Heart right ventricle (tissue), 16 donors: ENCODE measurements at regions of chr9 and their contacts with region 1.

Region 1: DNA sequence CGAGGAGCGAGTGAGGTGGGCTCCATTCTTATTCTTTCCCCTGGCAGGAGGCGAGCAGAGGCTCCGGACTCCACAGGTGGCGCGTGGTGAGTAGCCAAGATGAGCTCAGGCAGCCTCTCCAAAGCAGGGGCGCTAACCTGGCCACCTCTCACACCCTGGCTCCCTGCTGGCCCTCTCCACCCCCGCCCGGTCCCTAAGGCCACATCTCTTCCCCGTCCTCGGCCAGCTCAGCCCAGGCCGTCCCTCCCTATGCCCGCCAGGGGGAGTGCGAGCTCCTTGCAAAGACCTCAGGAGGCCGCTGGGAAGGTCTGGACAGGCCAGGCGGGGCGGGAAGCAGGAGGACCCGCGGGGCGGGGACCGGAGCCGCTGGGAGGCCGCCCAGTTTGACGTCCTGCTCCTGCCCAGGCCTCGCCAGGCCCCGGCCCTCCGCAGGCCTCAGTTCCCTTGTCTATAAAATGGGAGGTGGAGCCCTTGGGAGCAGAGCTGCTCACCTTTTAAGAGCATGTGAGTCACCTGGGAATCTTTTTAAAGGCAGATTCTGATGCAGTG is 46.3 kb upstream of the GGTA1 start:
- DNase-seq: peak; percentile 97
- ATAC-seq: peak; percentile 90 to 95 (median 94)
- H3K4me3 ChIP-seq: peak overlapping the region in 6 of 10 donors; percentile 17 to 39 (median 28)
- H3K27ac ChIP-seq: peak overlapping the region in 5 of 10 donors; percentile 26 to 54 (median 47)
- H3K4me1 ChIP-seq: peaks cover 5 to 27% (median 20%) of the 10 kb centered on the region in 9 donors
- H3K27me3 ChIP-seq: peaks cover 0 to 5% (median 0%) of the 10 kb centered on the region in 7 donors
- CTCF ChIP-seq: peak; percentile 95 to 99 (median 96)

Region 2: GRCh38 chr9:121598965-121599871 is 53.3 kb after region 1 on chr9:
- intact Hi-C with region 1: loop called in 2 of 10 experiments (anchors 2 to 5 kb)
- DNase-seq: peak; percentile 78 to 82
- ATAC-seq: peak; percentile 77 to 89 (median 86)
- H3K4me3 ChIP-seq: peak overlapping the region; percentile 66 to 90 (median 76)
- H3K27ac ChIP-seq: peak overlapping the region; percentile 84 to 96 (median 90)
- H3K4me1 ChIP-seq: peaks cover 6 to 67% (median 39%) of the 10 kb centered on the region in 9 donors
- H3K27me3 ChIP-seq: peaks cover 0 to 43% (median 0%) of the 10 kb centered on the region in 7 donors
- CTCF ChIP-seq: no peak

Region 3: GRCh38 chr9:121634329-121635261 is 88.6 kb after region 1 on chr9:
- intact Hi-C with region 1: loop called in 1 of 10 experiments (anchors 5 kb)
- DNase-seq: no peak
- ATAC-seq: peak; percentile 61 to 80 (median 74)
- H3K4me3 ChIP-seq: no peak overlapping the region
- H3K27ac ChIP-seq: peak overlapping the region in 5 of 10 donors; percentile 15 to 70 (median 51)
- H3K4me1 ChIP-seq: peaks cover 17 to 69% (median 47%) of the 10 kb centered on the region in 9 donors
- H3K27me3 ChIP-seq: no peaks in the 10 kb centered on the region
- CTCF ChIP-seq: peak; percentile 43 to 75 (median 60)

Region 4: DNA sequence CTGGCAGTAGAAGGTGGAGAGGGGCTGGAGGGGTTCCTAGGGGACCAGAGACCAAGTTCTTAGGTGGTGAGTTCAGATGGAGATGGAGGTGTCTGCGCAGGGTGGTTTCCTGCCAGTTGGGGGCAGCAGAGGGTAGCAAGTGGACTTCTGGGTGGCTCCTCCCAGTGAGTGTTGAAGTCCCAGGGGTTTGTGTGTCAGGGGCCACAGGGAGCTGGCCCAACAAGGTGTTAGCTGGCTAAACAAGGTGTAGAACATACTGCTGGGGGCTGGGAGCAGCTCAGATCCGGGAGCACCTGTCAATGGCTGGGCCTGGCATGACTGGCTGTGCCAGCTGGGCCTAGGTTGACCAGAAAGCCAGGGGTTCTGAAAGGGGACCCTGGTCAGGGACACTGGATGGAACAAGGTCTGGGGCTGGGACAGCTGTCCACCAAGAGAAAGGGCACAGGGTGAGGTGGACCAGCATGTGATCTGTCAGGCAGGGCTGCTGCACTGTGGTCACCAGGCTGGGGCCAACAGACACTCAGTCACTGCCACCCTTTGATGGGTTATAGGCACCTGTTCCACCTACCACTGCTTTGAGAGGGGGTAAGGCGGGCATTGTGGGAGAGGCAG is 141.1 kb after region 1 on chr9:
- intact Hi-C with region 1: loop called in 9 of 10 experiments (anchors 1 to 10 kb)
- DNase-seq: peak; percentile 51 to 78
- ATAC-seq: peak; percentile 56 to 80 (median 68)
- H3K4me3 ChIP-seq: no peak overlapping the region
- H3K27ac ChIP-seq: peak overlapping the region in 4 of 10 donors; percentile 9 to 24 (median 16)
- H3K4me1 ChIP-seq: peaks cover 12 to 73% (median 35%) of the 10 kb centered on the region in 9 donors
- H3K27me3 ChIP-seq: no peaks in the 10 kb centered on the region
- CTCF ChIP-seq: peak; percentile 73 to 90 (median 84)

Region 5: DNA sequence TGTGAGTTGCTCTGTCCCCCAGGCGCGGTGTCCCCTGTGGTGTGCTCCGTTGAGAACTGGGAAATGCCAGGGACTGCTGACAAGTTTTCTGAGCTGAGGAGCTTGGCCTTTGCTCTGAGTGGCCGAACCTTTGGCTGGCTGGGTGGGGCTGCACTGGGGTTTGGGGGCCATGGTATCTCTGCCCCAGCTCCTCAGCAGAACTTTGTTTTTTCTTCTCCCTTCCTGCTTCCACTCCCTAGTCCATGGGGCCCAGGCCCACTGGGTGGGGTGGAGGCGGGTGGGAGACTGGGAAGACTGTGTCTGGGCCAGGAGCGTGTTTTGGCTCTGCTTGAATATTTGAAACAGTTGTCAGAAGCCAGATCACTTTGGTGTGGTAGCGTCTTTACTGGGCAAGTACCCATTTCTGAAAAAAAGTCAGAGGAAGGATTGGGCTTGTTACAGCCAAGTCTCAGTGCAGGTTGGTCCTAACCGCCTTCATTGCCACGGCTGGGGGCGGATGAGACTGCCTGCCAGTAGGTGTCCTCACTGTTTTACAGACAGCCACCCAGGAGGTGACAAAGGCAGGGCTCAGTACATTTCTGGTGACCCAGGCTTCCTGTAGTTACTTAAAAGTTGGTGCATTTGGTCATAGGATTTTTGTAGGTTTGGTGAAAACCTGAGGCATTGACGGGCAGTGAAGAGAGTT is 198.2 kb after region 1 on chr9:
- intact Hi-C with region 1: loop called in 1 of 10 experiments (anchors 10 kb)
- DNase-seq: peak; percentile 67 to 75
- ATAC-seq: peak; percentile 43 to 83 (median 73)
- H3K4me3 ChIP-seq: peak overlapping the region; percentile 23 to 64 (median 52)
- H3K27ac ChIP-seq: peak overlapping the region; percentile 89 to 98 (median 94)
- H3K4me1 ChIP-seq: peaks cover 57 to 100% (median 90%) of the 10 kb centered on the region in 9 donors
- H3K27me3 ChIP-seq: no peaks in the 10 kb centered on the region
- CTCF ChIP-seq: peak; percentile 29 to 77 (median 54)

Region 6: DNA sequence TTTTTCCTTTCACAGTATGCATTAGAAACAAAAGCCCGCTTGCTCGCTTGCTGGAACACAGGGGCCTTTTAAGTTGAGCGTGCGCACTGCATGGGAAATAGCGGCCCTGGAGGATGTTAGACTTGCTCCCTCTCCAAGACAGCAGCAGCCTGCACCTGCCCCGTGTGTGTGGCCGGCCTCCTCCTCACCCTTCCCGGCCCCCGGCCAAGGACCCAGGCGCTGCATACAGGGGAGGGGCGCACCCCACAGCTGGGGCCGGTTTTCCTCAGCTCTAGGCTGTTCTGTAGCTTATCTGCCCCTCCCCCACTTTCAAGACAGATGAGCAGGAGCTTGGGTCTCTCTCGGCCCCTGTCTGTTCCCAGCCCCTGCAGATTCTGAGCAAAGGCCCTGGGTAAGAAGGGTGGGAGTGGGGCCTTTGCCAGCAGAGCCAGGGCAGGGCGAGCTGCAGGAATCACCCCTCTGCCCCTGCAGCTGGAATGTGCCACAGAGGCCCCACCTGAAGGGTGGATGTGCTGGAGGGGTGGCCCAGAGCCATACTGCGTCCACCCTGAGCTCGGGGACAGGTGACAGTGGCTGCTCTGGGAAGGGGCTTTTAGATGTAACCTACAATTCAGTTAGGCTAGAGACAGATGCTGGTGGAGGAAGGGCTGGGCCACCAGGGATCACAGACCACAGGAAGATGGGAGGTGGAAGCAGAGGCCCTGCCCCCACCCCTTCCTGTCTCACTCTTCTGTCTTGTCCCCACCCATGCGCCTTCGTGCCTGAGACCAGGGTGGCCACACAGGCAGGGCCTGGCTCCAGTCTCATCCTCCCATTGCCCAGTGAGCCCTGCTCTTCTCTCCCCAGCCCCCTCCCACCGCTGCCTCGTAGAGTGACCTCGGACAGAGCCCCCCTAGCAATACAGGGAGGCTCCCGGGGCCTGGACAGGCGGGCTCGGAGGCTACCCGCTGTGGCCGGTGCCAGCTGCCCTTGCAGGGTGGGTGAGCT is 237.9 kb after region 1 on chr9:
- intact Hi-C with region 1: no loop called
- DNase-seq: peak in 1 of 2 donors; percentile 4
- ATAC-seq: no peak
- H3K4me3 ChIP-seq: no peak overlapping the region
- H3K27ac ChIP-seq: no peak overlapping the region
- H3K4me1 ChIP-seq: peaks cover 2 to 45% (median 25%) of the 10 kb centered on the region in 9 donors
- H3K27me3 ChIP-seq: no peaks in the 10 kb centered on the region
- CTCF ChIP-seq: no peak

Region 7: DNA sequence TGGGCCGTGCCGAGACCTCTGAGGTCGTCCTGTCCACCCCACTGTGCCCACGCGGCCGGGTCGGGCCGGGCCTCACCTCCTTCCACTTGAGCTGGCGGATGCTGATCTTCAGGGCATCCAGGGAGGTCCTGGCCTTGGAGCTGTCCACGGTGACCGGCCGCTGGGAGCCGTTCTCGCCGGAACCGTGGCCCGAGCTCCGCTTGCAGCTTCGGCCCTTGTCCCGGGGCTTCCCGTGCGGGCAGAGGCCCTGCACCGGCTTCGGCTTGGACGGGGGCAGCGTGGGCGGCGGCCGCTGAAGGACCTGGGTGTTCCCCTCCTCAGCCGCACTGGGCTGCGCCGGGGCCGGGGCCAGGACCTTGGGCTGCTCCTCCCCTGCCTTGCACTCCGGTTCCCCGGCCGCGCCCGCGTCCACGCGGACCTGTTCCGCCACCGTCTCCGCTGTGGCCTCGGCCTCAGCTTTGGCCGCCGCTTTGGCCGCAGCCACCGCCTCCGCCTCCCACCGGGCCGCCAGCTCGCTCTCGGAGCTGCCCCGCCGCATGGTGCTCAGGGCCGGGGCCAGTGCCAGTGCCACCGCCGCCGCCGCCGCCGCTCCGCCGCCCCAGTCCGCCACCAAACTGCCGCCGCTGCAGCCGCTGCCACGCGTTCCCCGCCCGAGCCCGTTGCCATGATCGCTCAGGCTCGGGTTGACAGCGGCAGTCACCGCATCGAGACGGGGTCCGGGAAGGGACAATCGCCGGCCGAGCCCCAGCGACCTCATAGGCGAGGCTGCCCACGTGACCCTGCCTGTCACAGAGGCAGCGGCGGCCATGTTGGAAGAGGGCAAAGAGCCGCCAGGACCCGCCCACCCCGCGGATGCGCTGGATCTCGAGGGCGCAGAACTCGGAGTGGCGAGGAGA is 546.9 kb after region 1 on chr9 and contains the start of gene TTLL11:
- intact Hi-C with region 1: loop called in 1 of 10 experiments (anchors 10 kb)
- DNase-seq: peak; percentile 97
- ATAC-seq: peak; percentile 93 to 99 (median 98)
- H3K4me3 ChIP-seq: peak within 1 kb of the TSS; percentile 78 to 97 (median 94)
- H3K27ac ChIP-seq: peak within 1 kb of the TSS in 9 of 10 donors; percentile 61 to 86 (median 83)
- H3K4me1 ChIP-seq: peaks cover 14 to 50% (median 27%) of the 10 kb centered on the region in 9 donors
- H3K27me3 ChIP-seq: peaks cover 0 to 2% (median 0%) of the 10 kb centered on the region in 7 donors
- CTCF ChIP-seq: peak in 1 of 9 donors; percentile 3
- total RNA-seq, gene TTLL11: 5.2 to 8.7 (median 5.9) TPM